CD8-positive, alpha-beta T cell (primary cell): ENCODE measurements at regions of chr19 and their contacts with region 1.

Region 1: DNA sequence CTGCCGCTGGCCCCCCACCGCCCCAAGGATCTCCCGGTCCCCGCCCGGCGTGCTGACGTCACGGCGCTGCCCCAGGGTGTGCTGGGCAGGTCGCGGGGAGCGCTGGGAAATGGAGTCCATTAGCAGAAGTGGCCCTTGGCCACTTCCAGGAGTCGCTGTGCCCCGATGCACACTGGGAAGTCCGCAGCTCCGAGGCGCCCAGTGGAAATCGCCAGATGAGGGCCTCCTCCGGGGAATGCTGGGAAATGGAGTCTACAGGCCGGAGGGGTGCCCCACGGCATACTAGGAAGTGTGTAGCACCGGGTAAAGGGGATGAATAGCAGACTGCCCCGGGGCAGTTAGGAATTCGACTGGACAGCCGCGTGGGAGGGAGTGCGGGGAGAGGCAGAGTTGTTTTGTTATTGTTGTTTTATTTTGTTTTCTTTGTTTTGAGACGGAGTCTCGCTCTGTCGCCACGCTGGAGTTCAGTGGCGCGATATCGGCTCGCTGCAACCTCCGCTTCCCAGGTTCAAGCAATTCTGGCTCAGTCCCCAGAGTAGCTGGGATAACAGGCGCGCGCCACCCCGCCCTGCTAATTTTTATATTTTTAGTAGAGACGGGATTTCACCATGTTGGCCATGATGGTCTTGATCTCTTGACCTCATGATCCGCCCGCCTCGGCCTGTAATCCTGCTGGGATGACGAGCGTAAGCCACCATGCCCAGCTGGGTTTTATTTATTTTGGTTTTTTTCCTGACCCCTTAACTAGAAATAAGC is at the start of gene PPP1R12C:
- DNase-seq: peak; percentile 89 to 99 (median 97)
- ATAC-seq: peak; percentile 89
- H3K4me3 ChIP-seq: peak within 1 kb of the TSS; percentile 83 to 89
- H3K4me3 Mint-ChIP-seq: peak within 1 kb of the TSS; percentile 97
- H3K27ac ChIP-seq: peak within 1 kb of the TSS; percentile 61 to 84
- H3K27ac Mint-ChIP-seq: peak within 1 kb of the TSS; percentile 93
- H3K4me1 ChIP-seq: peaks cover 19% of the 10 kb centered on the region
- H3K4me1 Mint-ChIP-seq: peaks cover 34% of the 10 kb centered on the region
- H3K27me3 ChIP-seq: no peaks in the 10 kb centered on the region
- H3K27me3 Mint-ChIP-seq: no peaks in the 10 kb centered on the region
- CTCF ChIP-seq: no peak
- total RNA-seq, gene PPP1R12C: 93.8 to 97.6 TPM

Region 2: GRCh38 chr19:54115109-54116063 is 1002.4 kb before region 1 on chr19 and contains the starts of genes PRPF31 and TFPT:
- CTCF ChIA-PET with region 1: no interaction called
- POLR2A ChIA-PET with region 1: no interaction called
- intact Hi-C with region 1: loop called in 1 of 2 experiments (anchors 10 kb)
- DNase-seq: peak; percentile 90 to 99 (median 97)
- ATAC-seq: peak; percentile 87
- H3K4me3 ChIP-seq: peak within 1 kb of the TSS; percentile 77 to 81
- H3K4me3 Mint-ChIP-seq: peak within 1 kb of the TSS; percentile 91
- H3K27ac ChIP-seq: peak within 1 kb of the TSS; percentile 64 to 89
- H3K27ac Mint-ChIP-seq: peak within 1 kb of the TSS; percentile 90
- H3K4me1 ChIP-seq: peaks cover 22% of the 10 kb centered on the region
- H3K4me1 Mint-ChIP-seq: peaks cover 40% of the 10 kb centered on the region
- H3K27me3 ChIP-seq: no peaks in the 10 kb centered on the region
- H3K27me3 Mint-ChIP-seq: no peaks in the 10 kb centered on the region
- CTCF ChIP-seq: no peak
- total RNA-seq, gene PRPF31: 60.0 to 66.8 TPM
- total RNA-seq, gene TFPT: 7.8 to 8.2 TPM

Region 3: GRCh38 chr19:54937926-54938325 is 179.9 kb before region 1 on chr19:
- CTCF ChIA-PET with region 1: no interaction called
- POLR2A ChIA-PET with region 1: no interaction called
- intact Hi-C with region 1: no loop called
- DNase-seq: no peak
- ATAC-seq: no peak
- H3K4me3 ChIP-seq: no peak overlapping the region
- H3K4me3 Mint-ChIP-seq: no peak overlapping the region
- H3K27ac ChIP-seq: no peak overlapping the region
- H3K27ac Mint-ChIP-seq: no peak overlapping the region
- H3K4me1 ChIP-seq: no peaks in the 10 kb centered on the region
- H3K4me1 Mint-ChIP-seq: peaks cover 6% of the 10 kb centered on the region
- H3K27me3 ChIP-seq: no peaks in the 10 kb centered on the region
- H3K27me3 Mint-ChIP-seq: peaks cover 23% of the 10 kb centered on the region
- CTCF ChIP-seq: no peak

Region 4: DNA sequence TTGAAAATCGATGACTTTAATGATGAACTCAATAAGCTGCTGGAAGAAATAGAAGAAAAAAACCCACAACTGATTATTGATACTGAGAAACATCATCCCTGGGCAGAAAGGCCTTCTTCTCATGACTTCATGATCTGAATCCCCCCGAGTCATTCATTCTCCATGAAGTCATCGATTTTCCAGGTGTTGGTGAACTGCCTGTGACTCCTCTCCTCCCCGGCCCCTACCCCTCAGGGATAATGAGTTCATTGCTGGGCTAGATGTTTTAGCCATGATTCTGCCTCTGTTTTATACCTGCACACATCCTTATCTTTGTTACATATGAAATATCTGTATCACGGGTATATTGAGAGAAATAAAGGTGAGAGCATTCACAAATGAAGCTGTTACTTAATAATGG is 117.1 kb before region 1 on chr19:
- CTCF ChIA-PET with region 1: no interaction called
- POLR2A ChIA-PET with region 1: no interaction called
- intact Hi-C with region 1: no loop called
- DNase-seq: no peak
- ATAC-seq: no peak
- H3K4me3 ChIP-seq: no peak overlapping the region
- H3K4me3 Mint-ChIP-seq: no peak overlapping the region
- H3K27ac ChIP-seq: no peak overlapping the region
- H3K27ac Mint-ChIP-seq: no peak overlapping the region
- H3K4me1 ChIP-seq: peaks cover 10% of the 10 kb centered on the region
- H3K4me1 Mint-ChIP-seq: peaks cover 6% of the 10 kb centered on the region
- H3K27me3 ChIP-seq: peaks cover 0 to 2% of the 10 kb centered on the region in 2 experiments
- H3K27me3 Mint-ChIP-seq: peaks cover 23% of the 10 kb centered on the region
- CTCF ChIP-seq: no peak

Region 5: GRCh38 chr19:55014717-55015116 is 103.1 kb before region 1 on chr19:
- CTCF ChIA-PET with region 1: no interaction called
- POLR2A ChIA-PET with region 1: no interaction called
- intact Hi-C with region 1: no loop called
- DNase-seq: peak in 2 of 9 experiments; percentile 27 to 57
- ATAC-seq: peak; percentile 64
- H3K4me3 ChIP-seq: no peak overlapping the region
- H3K4me3 Mint-ChIP-seq: peak overlapping the region; percentile 54
- H3K27ac ChIP-seq: no peak overlapping the region
- H3K27ac Mint-ChIP-seq: peak overlapping the region; percentile 68
- H3K4me1 ChIP-seq: no peaks in the 10 kb centered on the region
- H3K4me1 Mint-ChIP-seq: peaks cover 8% of the 10 kb centered on the region
- H3K27me3 ChIP-seq: no peaks in the 10 kb centered on the region
- H3K27me3 Mint-ChIP-seq: peaks cover 6% of the 10 kb centered on the region
- CTCF ChIP-seq: no peak

Region 6: GRCh38 chr19:55080968-55081772 is 36.6 kb before region 1 on chr19:
- CTCF ChIA-PET with region 1: no interaction called
- POLR2A ChIA-PET with region 1: interaction called, 3 read pairs
- intact Hi-C with region 1: loop called (anchors 1 kb)
- DNase-seq: peak; percentile 82 to 92 (median 89)
- ATAC-seq: peak; percentile 76
- H3K4me3 ChIP-seq: peak overlapping the region; percentile 58 to 83
- H3K4me3 Mint-ChIP-seq: peak overlapping the region; percentile 84
- H3K27ac ChIP-seq: peak overlapping the region in 1 of 2 experiments; percentile 38
- H3K27ac Mint-ChIP-seq: no peak overlapping the region
- H3K4me1 ChIP-seq: peaks cover 30% of the 10 kb centered on the region
- H3K4me1 Mint-ChIP-seq: peaks cover 22% of the 10 kb centered on the region
- H3K27me3 ChIP-seq: peaks cover 18 to 23% of the 10 kb centered on the region in 2 experiments
- H3K27me3 Mint-ChIP-seq: peaks cover 61% of the 10 kb centered on the region
- CTCF ChIP-seq: no peak

Region 7: GRCh38 chr19:55173714-55174409 is 56.0 kb after region 1 on chr19:
- CTCF ChIA-PET with region 1: no interaction called
- POLR2A ChIA-PET with region 1: no interaction called
- intact Hi-C with region 1: no loop called
- DNase-seq: peak in 3 of 9 experiments; percentile 25 to 53 (median 46)
- ATAC-seq: peak; percentile 50
- H3K4me3 ChIP-seq: peak overlapping the region; percentile 44 to 46
- H3K4me3 Mint-ChIP-seq: peak overlapping the region; percentile 68
- H3K27ac ChIP-seq: no peak overlapping the region
- H3K27ac Mint-ChIP-seq: no peak overlapping the region
- H3K4me1 ChIP-seq: peaks cover 24% of the 10 kb centered on the region
- H3K4me1 Mint-ChIP-seq: peaks cover 19% of the 10 kb centered on the region
- H3K27me3 ChIP-seq: peaks cover 46 to 57% of the 10 kb centered on the region in 2 experiments
- H3K27me3 Mint-ChIP-seq: peaks cover 79% of the 10 kb centered on the region
- CTCF ChIP-seq: no peak

Region 8: DNA sequence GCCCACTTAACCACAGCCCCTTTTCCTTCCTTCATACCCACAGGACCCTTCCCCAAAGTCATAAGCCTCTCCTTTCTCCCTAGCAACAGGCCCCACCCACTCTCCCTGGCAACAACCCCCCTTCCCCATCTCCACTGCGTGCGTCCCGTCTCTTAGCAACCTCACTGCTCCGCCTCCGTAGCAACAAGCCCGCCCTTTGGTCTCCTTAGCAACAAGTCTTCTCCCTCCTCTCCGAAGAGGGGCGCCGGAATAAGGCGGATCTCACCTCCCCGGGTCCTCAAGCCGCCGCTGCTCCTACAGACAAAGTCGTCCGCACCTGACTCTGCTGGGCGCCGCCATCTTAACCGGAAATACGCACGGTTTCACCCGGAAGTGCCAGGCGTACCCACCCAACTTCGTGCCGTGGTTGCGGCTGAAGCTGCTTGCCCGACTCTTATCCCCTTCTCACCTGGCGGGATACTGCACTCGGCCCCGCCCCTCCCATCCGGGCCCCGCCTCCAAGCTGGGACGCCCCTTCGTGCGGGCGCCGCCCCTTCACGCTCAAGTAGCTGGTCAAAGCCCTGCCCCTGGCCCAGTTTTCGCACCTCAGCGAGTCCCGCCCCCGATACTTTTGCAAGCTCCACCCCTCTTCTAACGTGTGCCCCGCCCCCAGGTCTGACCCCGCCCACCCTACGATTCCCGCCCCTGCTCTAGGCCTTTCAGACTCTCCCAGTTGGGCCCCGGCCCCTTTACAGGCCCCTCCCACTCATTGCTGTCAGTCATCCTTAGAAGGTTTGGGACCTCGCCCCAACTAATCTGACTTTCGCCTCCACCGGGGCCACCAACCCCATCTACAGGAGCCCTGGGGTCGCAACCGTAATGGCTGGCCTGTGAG is 162.2 kb after region 1 on chr19 and contains the start of gene HSPBP1:
- CTCF ChIA-PET with region 1: no interaction called
- POLR2A ChIA-PET with region 1: no interaction called
- intact Hi-C with region 1: loop called in 1 of 2 experiments (anchors 1 kb)
- DNase-seq: peak; percentile 87 to 98 (median 95)
- ATAC-seq: peak; percentile 86
- H3K4me3 ChIP-seq: peak within 1 kb of the TSS; percentile 73 to 85
- H3K4me3 Mint-ChIP-seq: peak within 1 kb of the TSS; percentile 96
- H3K27ac ChIP-seq: peak within 1 kb of the TSS; percentile 89 to 90
- H3K27ac Mint-ChIP-seq: peak within 1 kb of the TSS; percentile 98
- H3K4me1 ChIP-seq: peaks cover 32% of the 10 kb centered on the region
- H3K4me1 Mint-ChIP-seq: peaks cover 44% of the 10 kb centered on the region
- H3K27me3 ChIP-seq: no peaks in the 10 kb centered on the region
- H3K27me3 Mint-ChIP-seq: no peaks in the 10 kb centered on the region
- CTCF ChIP-seq: no peak
- total RNA-seq, gene HSPBP1: 18.8 to 18.9 TPM

Region 9: DNA sequence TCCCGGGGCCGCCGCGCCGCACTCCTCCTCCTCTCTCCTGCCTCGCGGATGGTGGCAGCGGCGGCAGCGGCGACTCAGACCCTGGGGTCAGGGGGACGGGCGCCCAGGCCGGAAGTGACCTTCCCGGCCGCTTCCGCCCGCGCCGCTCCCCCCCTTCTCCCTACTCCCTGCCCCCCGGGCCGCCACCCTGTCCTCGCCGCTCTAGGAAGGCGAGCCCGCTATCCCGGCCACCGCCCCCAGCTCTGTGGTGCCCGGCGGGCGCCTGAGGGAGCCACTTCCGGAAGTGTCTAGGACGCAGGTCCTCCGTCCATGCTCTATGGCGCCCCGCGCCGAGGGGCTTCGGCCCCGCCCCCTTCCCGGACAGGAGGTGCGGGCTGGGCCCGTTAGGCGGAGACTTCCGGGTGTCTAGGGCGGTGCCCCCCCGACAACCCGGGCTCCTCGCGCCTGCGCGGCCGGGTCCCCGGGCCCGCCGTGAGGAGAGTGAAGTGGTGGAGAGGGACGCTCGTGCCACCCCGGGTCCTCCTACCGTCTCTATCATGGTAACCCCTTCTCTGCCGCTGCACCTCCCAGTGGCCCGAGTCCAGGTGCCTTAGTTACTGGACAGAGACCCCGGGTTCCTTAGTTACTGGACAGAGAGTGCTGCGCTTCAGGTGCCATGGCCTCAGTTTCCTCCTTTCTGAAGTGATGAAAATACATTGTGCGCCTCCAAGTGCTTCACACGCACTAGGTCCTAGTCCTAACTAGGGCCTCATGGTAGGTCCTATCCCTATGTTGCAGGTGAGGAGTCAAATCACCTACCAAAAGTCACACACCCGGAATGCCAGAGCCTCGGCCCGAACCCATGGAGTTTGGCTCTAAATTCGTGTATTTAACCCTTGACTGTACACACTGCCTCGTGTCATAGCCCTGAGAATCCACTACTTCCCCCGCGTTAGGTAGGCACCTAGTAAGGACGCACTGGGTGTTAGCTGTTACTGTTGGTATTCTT is 1003.7 kb after region 1 on chr19 and contains the start of gene ZNF787:
- CTCF ChIA-PET with region 1: no interaction called
- POLR2A ChIA-PET with region 1: no interaction called
- intact Hi-C with region 1: loop called in 1 of 2 experiments (anchors 5 kb)
- DNase-seq: peak; percentile 94 to 99 (median 97)
- ATAC-seq: peak; percentile 82
- H3K4me3 ChIP-seq: peak within 1 kb of the TSS; percentile 56 to 67
- H3K4me3 Mint-ChIP-seq: peak within 1 kb of the TSS; percentile 88
- H3K27ac ChIP-seq: peak within 1 kb of the TSS; percentile 81 to 97
- H3K27ac Mint-ChIP-seq: peak within 1 kb of the TSS; percentile 94
- H3K4me1 ChIP-seq: peaks cover 24% of the 10 kb centered on the region
- H3K4me1 Mint-ChIP-seq: peaks cover 43% of the 10 kb centered on the region
- H3K27me3 ChIP-seq: no peaks in the 10 kb centered on the region
- H3K27me3 Mint-ChIP-seq: no peaks in the 10 kb centered on the region
- CTCF ChIP-seq: no peak
- total RNA-seq, gene ZNF787: 10.2 to 10.8 TPM